ENCODE measurements at regions of chr12 and their contacts with region 1.

Region 1: DNA sequence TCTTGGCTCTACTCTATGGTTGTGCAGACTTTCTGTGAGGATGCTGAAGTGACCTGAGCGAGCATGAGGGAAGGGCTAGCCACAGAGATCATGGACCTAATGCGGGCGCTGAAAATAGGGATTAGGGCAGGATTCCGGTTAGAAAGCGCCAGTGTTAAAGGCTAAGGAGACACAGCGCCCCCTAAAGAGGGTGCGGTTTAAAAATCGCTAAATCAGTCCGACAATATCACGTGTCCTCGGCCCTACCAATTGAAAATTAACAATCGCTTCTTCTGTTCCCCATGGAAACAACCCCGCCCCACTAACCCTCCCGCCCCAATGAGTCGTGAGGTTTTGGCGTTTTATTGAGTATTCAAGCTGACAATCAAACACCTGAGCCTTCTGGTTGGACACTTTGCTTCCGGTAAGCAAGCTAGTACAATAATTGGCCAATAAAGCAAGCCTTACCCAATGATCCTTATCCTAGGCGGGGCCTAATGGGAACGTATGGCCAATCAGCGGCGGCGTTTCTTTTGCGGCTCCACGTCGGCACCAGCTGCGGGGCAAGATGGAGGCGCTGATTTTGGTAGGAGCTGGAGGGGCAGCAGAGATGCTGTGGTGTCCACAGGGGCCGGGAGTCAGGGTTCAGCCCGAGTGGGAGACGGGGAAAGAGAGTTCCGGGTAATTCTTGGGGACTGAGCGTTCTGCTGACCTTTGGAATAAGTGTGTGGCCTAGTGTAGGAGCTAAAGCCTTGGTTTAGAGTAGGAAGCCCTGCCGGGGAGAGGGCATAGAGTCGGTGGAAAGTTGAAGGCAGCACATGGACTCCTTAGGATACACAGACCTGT is at the start of gene COPZ1:
- DNase-seq: peak; percentile 94
- ATAC-seq: peak; percentile 97
- H3K4me3 Mint-ChIP-seq: peak within 1 kb of the TSS; percentile 100
- H3K27ac Mint-ChIP-seq: peak within 1 kb of the TSS; percentile 98
- H3K4me1 Mint-ChIP-seq: peaks cover 24% of the 10 kb centered on the region
- H3K27me3 Mint-ChIP-seq: peaks cover 3% of the 10 kb centered on the region; the same call in 1 of the 2 replicates
- CTCF ChIP-seq: peak; percentile 84
- total RNA-seq, gene COPZ1: 98.2 to 116 TPM (median 115 TPM) in 3 replicates

Region 2: GRCh38 chr12:54251667-54252284 is 73.1 kb before region 1 on chr12:
- CTCF ChIA-PET with region 1: interaction called, 25 read pairs
- POLR2A ChIA-PET with region 1: no interaction called
- DNase-seq: no peak
- ATAC-seq: peak; percentile 72; the same call in 1 of the 2 replicates
- H3K4me3 Mint-ChIP-seq: no peak overlapping the region
- H3K27ac Mint-ChIP-seq: no peak overlapping the region
- H3K4me1 Mint-ChIP-seq: no peaks in the 10 kb centered on the region; the same call in 1 of the 2 replicates
- H3K27me3 Mint-ChIP-seq: no peaks in the 10 kb centered on the region
- CTCF ChIP-seq: no peak

Region 3: DNA sequence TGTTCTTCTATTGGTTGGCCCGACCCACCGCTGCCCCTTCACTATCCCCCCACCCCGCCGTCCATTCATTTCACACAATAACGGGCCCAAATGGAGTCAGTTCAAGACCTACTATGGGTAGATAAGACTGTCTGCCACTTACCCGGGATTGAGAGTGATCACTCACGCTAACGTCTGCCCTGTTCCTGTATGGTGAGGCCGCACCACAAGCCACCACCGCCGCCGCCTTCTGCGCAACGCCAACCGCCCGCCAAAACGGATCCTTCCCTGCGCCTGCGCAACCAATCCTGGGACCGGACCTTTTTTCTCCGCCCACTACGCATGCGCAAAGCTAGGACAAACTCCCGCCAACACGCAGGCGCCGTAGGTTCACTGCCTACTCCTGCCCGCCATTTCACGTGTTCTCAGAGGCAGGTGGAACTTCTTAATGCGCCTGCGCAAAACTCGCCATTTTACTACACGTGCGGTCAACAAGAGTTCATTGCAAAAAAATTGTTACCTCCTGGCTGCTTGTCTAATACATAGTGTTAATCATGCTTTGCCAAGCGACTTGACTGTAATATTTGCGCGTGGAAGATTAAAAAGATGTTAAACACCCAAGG is 44.9 kb before region 1 on chr12 and contains the start of gene CBX5:
- CTCF ChIA-PET with region 1: interaction called, 23 read pairs
- POLR2A ChIA-PET with region 1: interaction called, 21 read pairs
- DNase-seq: peak; percentile 99
- ATAC-seq: peak; percentile 53
- H3K4me3 Mint-ChIP-seq: no peak within 1 kb of the TSS
- H3K27ac Mint-ChIP-seq: no peak within 1 kb of the TSS
- H3K4me1 Mint-ChIP-seq: peaks cover 58% of the 10 kb centered on the region
- H3K27me3 Mint-ChIP-seq: no peaks in the 10 kb centered on the region
- CTCF ChIP-seq: no peak
- total RNA-seq, gene CBX5: 182 to 218 TPM (median 216 TPM) in 3 replicates

Region 4: DNA sequence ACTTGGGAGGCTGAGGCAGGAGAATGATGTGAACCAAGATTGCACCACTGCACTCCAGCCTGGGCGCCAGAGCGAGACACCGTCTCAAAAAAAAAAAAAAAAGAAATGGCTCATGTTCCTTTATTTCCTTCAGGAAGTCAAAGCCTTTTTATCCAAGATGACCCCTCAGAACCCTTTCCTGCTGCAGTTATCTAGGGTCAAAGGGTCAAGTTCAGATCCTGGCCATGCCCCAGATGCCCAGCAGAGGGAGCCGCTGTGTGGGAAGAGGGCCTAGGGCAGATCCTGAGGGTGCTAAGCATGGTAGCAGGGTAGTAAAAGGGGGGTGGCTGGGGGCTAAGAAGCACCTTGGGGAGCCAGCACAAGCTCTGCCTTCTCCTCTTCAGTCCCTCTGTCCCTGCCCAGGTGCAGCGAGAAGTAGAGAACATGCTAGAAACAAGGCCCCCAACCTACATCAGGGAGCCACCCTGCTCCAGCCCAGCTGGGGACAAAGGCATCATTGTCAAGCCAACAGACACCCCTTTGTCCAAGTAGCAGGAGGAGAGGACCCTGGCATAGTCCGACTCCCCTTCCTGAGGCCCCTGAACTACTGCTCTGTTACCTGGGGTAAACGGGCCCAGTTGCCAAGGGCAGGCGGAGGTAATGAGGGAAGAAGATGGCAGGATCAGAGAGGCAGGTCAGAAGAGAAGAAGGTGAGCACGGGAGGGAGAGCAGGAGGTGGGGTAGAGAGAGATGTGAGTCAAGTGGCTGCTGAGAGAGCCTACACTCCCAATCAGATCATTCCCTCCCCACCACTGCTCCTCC is 30.5 kb before region 1 on chr12:
- CTCF ChIA-PET with region 1: interaction called, 130 read pairs
- POLR2A ChIA-PET with region 1: interaction called, 10 read pairs
- DNase-seq: peak; percentile 88
- ATAC-seq: peak; percentile 76
- H3K4me3 Mint-ChIP-seq: no peak overlapping the region
- H3K27ac Mint-ChIP-seq: no peak overlapping the region
- H3K4me1 Mint-ChIP-seq: peaks cover 4% of the 10 kb centered on the region
- H3K27me3 Mint-ChIP-seq: peaks cover 4% of the 10 kb centered on the region
- CTCF ChIP-seq: peak; percentile 77

Region 5: DNA sequence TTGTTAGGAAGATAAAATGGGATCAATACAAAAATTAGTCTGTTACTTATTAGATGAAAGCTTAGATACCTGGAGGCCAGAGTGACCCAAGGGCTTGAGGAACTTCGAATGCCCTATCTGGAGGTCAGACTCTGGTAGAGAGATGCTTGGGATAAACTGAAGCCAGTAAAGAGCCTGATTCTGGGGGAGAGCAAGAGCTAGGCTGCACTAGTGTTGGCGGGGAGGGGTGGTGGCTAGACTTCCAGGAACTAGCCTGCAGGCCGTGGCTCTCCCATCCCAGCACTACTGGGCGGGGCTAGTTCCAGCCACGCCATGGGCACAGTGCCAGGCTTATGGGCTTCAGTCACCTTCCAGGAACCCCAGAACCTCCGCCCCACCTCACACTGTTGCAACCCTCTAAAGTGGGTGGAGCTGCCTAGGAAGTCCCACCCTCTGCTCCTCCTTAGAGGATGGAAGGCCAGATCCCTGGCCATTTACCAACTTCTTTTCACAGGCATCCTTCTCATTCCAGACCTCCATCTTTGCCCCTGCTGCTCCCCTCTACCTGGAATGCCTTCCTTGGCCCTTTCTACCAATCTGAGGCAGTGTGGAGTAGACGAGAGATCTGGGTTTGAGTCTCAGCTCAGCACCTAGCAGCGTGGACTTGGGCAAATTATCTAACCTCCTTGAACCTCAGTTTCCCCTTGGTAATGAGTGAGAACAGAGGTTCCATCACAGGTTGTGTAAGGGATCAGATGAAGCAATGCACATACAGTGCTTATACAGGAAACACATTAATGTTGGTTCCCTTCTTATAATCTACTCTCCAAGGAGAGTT is 17.7 kb before region 1 on chr12:
- CTCF ChIA-PET with region 1: interaction called, 53 read pairs
- POLR2A ChIA-PET with region 1: interaction called, 3 read pairs
- DNase-seq: peak; percentile 45
- ATAC-seq: peak; percentile 84
- H3K4me3 Mint-ChIP-seq: no peak overlapping the region
- H3K27ac Mint-ChIP-seq: no peak overlapping the region
- H3K4me1 Mint-ChIP-seq: peaks cover 31% of the 10 kb centered on the region
- H3K27me3 Mint-ChIP-seq: no peaks in the 10 kb centered on the region
- CTCF ChIP-seq: no peak

Region 6: DNA sequence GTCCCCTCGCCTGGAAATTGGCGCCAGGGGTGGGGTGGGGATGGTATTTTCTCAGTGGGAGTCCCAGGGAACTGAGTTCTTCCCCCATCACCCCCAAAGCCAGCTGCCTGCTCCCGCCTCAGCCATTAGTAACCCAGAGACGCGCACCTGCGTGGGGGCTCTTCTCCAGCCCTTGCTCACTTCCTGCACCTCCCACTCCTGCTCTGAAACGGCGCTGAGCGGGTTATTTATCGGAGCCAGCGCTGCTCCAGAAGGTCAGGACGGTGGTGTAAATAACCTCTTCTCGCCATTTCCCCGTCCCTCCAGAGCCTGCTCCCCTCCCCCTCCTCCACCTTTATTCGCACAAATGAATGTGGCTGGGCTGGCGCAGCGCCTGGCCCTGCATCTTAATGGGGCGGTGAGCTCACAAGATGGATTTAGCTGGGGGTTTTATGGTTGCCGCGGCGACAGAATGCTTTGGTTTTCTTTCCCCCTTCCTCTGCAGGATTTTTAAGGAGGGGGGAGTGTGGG is 27.2 kb after region 1 on chr12:
- CTCF ChIA-PET with region 1: interaction called, 75 read pairs
- POLR2A ChIA-PET with region 1: interaction called, 3 read pairs
- DNase-seq: peak; percentile 70
- ATAC-seq: peak; percentile 55
- H3K4me3 Mint-ChIP-seq: peak overlapping the region; percentile 87
- H3K27ac Mint-ChIP-seq: peak overlapping the region; percentile 92
- H3K4me1 Mint-ChIP-seq: peaks cover 47% of the 10 kb centered on the region
- H3K27me3 Mint-ChIP-seq: peaks cover 18% of the 10 kb centered on the region
- CTCF ChIP-seq: no peak

Region 7: GRCh38 chr12:54368709-54369583 is 44.1 kb after region 1 on chr12:
- CTCF ChIA-PET with region 1: interaction called, 18 read pairs
- POLR2A ChIA-PET with region 1: no interaction called
- DNase-seq: peak; percentile 90
- ATAC-seq: peak; percentile 49
- H3K4me3 Mint-ChIP-seq: peak overlapping the region; percentile 75
- H3K27ac Mint-ChIP-seq: no peak overlapping the region
- H3K4me1 Mint-ChIP-seq: peaks cover 24% of the 10 kb centered on the region
- H3K27me3 Mint-ChIP-seq: peaks cover 49% of the 10 kb centered on the region
- CTCF ChIP-seq: peak; percentile 73